GM18951 (cell line): ENCODE measurements at regions of chrX and their contacts with region 1.

Region 1: DNA sequence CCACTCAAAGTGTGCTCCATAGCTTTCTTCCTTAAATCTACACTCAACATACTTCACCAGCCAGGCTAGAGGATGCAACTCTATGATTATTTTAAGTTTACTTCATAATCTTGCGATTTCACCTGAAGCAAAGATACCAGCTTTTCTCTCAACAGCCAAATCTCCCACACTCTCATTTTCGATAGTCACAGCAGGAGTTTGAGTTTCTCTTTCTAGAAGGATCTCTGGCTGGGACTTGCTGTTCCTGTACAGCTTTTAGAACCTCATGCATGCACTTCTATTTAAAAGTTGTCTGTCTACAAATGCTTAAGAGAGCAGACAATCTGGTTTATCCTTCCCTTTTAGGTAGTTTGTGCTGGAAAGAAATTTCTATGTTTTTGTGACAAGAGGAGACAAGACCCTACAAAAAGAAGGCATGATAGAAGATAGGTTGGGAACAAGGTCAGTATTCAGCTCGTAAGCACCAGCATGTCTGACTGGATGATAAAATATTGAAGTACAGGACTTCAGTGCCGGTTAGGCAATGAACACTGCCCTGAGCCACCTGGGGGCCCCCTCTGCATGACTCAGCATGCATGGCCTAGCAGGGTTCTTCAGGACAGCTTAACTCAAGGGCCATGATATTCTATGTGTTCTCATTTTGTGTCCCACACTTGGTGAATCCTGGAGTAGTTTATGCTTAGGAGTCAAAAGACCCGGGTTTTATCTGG is 65.6 kb downstream of the ATXN3L start:
- POLR2A ChIP-seq: no peak

Region 2: GRCh38 chrX:12974796-12975669 is 279.2 kb before region 1 on chrX and contains the start of gene TMSB4X:
- in situ Hi-C with region 1: loop called (anchors 25 kb)
- POLR2A ChIP-seq: peak; percentile 100

Region 3: GRCh38 chrX:13087322-13088155 is 166.7 kb before region 1 on chrX:
- in situ Hi-C with region 1: loop called (anchors 10 kb)
- POLR2A ChIP-seq: no peak

Region 4: GRCh38 chrX:13440176-13440575 is 185.9 kb after region 1 on chrX:
- in situ Hi-C with region 1: no loop called
- POLR2A ChIP-seq: no peak

Region 5: DNA sequence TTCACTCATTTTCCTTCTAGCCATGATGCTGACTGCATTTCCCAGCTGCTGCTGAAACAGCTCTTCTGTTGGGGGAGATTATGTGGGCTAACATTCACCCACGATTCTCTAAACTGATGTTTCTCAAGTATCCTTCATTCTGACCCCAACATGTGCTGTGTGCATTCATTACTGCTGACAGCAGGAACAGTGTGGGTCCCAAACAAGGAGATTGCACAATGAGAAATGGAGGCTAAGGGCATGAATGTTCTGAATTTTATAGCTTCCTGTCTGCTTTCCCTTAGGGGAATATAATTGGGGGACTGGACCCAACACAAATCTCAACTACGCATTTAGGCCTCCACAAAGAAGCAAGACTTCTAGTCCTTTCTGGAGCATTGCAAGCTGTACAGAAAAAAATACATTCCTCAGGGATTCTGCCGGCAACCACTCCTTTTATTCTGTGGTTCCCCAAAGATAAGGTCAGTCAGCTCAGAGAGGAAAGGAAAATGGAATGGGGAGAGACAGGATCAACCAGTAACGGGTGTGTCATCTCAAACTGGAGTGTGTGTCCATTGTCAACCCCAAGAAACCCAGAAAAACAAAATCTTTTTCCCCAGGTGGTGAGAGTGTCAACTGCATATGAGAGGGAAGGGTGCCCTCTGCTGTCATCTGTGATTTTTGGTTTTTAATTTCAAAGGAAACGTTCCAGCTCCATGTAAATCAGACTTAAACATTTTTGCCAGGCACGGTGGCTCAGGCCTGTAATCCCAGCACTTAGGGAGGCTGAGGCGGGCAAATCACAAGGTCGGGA is 233.7 kb after region 1 on chrX:
- in situ Hi-C with region 1: loop called (anchors 25 kb)
- POLR2A ChIP-seq: no peak

Region 6: DNA sequence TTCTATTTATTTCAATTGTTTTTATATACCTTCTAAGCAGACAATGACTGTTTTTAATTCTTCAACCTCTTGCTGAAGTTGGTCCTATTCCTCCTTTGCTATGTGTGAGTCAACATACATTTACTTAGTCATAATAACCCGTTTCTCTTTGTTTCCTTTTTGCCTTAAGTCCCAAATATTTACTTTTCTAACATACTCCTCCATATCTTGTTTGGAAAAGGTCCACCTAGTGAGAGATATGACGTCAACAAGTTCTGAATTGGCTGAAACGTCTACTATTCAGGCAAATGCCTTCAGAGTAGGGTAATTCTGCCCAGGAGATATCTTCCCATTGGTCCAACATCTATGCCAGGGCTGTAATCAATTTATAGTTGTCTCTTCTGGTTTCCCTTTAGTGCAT is 954.8 kb after region 1 on chrX:
- in situ Hi-C with region 1: no loop called
- POLR2A ChIP-seq: no peak

Region 7: DNA sequence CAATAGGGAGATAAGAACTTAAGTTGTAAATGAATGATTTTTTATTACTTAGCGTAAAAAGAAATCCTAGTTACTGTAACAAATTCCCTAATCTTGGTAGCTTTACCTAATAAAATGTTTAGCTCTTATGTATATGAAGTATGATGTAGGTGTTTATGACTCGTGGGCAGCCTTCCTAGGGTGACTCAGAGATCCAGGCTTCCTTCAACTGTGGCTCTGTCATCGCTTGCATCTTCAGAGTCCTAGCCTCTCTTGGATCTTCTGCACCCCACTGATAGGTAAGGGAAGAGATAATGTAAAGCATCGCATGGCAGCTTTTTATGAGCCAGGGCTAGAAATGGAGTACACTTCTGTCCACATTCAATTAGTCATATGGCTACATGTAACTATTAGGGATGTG is 1109.5 kb after region 1 on chrX:
- in situ Hi-C with region 1: no loop called
- POLR2A ChIP-seq: no peak